Heart left ventricle (tissue), 16 donors: ENCODE measurements at regions of chr17 and their contacts with region 1.

Region 1: DNA sequence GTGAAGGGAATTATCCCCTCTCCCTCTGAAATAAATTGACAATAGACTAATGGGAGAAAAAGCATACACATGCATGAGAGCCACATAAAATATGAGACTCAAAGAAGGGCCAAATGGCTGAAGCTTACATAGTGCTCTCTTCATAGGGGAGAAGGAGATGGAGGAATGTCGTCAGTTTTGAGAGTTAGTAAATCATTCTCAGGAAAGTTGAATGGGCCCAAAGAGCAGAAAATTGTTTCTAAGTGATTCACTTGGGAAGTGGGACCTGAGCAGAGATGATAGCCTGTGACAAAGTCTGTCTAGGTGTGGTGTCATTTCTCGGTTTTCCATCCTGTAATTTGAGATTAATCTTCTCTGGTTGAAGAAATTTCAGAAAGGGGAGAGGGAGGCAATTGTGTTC is 35.0 kb downstream of the BCAS3 start:
- DNase-seq: no peak
- ATAC-seq: no peak
- H3K4me3 ChIP-seq: no peak overlapping the region
- H3K27ac ChIP-seq: no peak overlapping the region
- H3K4me1 ChIP-seq: no peaks in the 10 kb centered on the region
- H3K27me3 ChIP-seq: no peaks in the 10 kb centered on the region
- CTCF ChIP-seq: no peak
- POLR2A ChIP-seq: no peak

Region 2: DNA sequence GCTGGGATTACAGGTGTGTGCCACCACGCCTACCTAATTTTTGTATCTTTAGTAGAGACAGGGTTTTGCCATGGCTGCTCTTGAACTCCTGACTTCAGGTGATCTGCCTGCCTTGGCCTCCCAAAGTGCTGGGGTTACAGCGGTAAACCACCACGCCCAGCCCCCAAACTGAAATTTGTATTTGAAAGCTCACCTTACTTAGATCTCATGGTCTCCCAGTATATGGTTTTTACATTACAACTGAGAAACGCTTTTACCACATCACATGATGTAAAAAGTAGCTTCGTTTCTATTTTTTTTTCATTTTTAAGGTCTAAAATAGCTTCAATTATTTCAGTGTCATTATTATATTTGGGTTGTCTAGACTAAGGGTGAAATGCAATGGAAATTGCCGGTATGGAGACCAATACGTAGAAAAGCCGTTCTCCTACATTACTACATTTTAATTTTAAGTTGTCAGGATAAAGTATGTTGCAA is 58.3 kb after region 1 on chr17:
- intact Hi-C with region 1: loop called in 1 of 10 experiments (anchors 10 kb)
- DNase-seq: no peak
- ATAC-seq: no peak
- H3K4me3 ChIP-seq: no peak overlapping the region
- H3K27ac ChIP-seq: no peak overlapping the region
- H3K4me1 ChIP-seq: no peaks in the 10 kb centered on the region
- H3K27me3 ChIP-seq: no peaks in the 10 kb centered on the region
- CTCF ChIP-seq: no peak
- POLR2A ChIP-seq: no peak

Region 3: GRCh38 chr17:60959696-60960095 is 247.0 kb after region 1 on chr17:
- intact Hi-C with region 1: loop called in 1 of 10 experiments (anchors 10 kb)
- DNase-seq: no peak
- ATAC-seq: no peak
- H3K4me3 ChIP-seq: no peak overlapping the region
- H3K27ac ChIP-seq: no peak overlapping the region
- H3K4me1 ChIP-seq: no peaks in the 10 kb centered on the region
- H3K27me3 ChIP-seq: no peaks in the 10 kb centered on the region
- CTCF ChIP-seq: no peak
- POLR2A ChIP-seq: no peak

Region 4: GRCh38 chr17:61849674-61850073 is 1137.0 kb after region 1 on chr17:
- intact Hi-C with region 1: loop called in 2 of 10 experiments (anchors 10 kb)
- DNase-seq: no peak
- ATAC-seq: no peak
- H3K4me3 ChIP-seq: no peak overlapping the region
- H3K27ac ChIP-seq: no peak overlapping the region
- H3K4me1 ChIP-seq: no peaks in the 10 kb centered on the region
- H3K27me3 ChIP-seq: no peaks in the 10 kb centered on the region
- CTCF ChIP-seq: no peak
- POLR2A ChIP-seq: no peak